GM12878 (cell line): ENCODE measurements at regions of chr5 and their contacts with region 1.

Region 1: DNA sequence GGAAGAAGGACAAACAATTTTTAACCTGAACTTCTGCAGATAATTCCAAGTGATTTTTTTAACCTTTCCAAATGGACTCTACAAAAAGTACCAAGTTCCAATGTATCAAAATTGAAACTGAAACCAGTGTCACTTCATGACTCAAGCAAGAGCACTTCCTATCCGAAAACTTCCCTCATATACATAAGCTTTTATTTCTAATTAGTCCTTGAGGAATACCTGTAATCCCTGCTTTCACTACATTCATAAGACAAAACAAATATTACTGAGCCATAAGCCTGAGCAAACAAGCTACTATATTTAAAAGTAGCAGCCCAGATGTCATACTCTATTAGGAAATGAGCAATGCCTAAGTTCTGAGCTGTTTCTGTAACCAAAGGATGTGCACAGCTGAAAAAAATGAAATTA is 224.4 kb downstream of the EBF1 start:
- DNase-seq: no peak
- ATAC-seq: peak; percentile 54
- H3K4me3 ChIP-seq: no peak overlapping the region
- H3K27ac ChIP-seq: peak overlapping the region; percentile 71
- H3K4me1 ChIP-seq: peaks cover 55% of the 10 kb centered on the region
- H3K27me3 ChIP-seq: no peaks in the 10 kb centered on the region
- CTCF ChIP-seq: no peak
- EP300 ChIP-seq: peak; percentile 60 to 64; a peak in 2 of 4 replicates
- POLR2A ChIP-seq: no peak
- RAD21 ChIP-seq: no peak

Region 2: GRCh38 chr5:158565017-158565789 is 310.1 kb before region 1 on chr5:
- CTCF ChIA-PET with region 1: no interaction called
- POLR2A ChIA-PET with region 1: no interaction called
- RAD21 ChIA-PET with region 1: no interaction called
- SMC1A ChIA-PET with region 1: no interaction called
- in situ Hi-C with region 1: no loop called
- intact Hi-C with region 1: no loop called
- DNase-seq: no peak
- ATAC-seq: no peak
- H3K4me3 ChIP-seq: no peak overlapping the region
- H3K27ac ChIP-seq: no peak overlapping the region
- H3K4me1 ChIP-seq: peaks cover 11% of the 10 kb centered on the region
- H3K27me3 ChIP-seq: no peaks in the 10 kb centered on the region; a peak in 1 of 4 replicates
- CTCF ChIP-seq: no peak
- EP300 ChIP-seq: no peak
- POLR2A ChIP-seq: no peak
- RAD21 ChIP-seq: no peak

Region 3: GRCh38 chr5:158780656-158781237 is 94.5 kb before region 1 on chr5:
- CTCF ChIA-PET with region 1: interaction called, 4 read pairs
- POLR2A ChIA-PET with region 1: interaction called, 8 read pairs
- RAD21 ChIA-PET with region 1: interaction called, 37 read pairs
- SMC1A ChIA-PET with region 1: interaction called, 36 read pairs
- in situ Hi-C with region 1: no loop called
- intact Hi-C with region 1: loop called (anchors 2 kb)
- DNase-seq: peak; percentile 28
- ATAC-seq: peak; percentile 85
- H3K4me3 ChIP-seq: no peak overlapping the region
- H3K27ac ChIP-seq: peak overlapping the region; percentile 46
- H3K4me1 ChIP-seq: peaks cover 18% of the 10 kb centered on the region
- H3K27me3 ChIP-seq: no peaks in the 10 kb centered on the region
- CTCF ChIP-seq: no peak
- EP300 ChIP-seq: no peak
- POLR2A ChIP-seq: no peak
- RAD21 ChIP-seq: no peak

Region 4: DNA sequence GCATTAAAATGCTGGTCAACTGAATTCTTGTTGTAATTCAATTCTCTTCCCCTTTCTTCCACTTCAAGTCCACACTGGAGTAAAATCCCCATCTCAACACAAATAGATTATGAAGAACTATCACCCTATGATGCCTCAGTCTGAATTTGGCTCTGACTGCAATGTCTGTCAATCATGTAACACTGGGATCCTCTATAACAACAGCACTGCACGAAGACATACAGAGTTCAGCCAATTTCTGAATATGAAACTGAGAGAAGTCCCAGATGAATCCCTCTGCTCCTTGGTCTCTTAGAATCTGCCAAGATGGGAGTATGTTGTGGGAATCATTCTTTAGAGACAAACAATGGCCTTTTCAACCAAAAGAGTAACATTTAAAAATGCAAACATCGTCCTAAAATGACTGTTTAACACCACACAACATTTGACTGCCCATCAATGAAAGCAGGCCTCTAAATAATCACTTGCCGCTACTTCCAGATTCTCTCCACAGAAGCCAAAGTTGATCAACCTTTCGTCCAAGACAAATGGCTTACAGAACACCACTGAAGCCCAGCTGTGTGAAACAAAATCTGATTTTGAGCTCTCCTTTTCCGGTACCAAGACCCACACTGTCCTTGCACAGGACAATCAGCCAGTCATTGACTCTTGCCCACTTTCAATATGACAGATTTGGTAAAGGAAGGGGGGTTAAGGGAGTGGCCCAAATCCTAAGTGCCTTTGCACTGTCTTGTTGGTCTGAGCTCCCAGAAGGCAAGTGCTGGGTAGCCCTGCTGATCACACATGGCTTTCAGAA is 33.6 kb before region 1 on chr5:
- CTCF ChIA-PET with region 1: interaction called, 3 read pairs
- POLR2A ChIA-PET with region 1: interaction called, 7 read pairs
- RAD21 ChIA-PET with region 1: interaction called, 16 read pairs
- SMC1A ChIA-PET with region 1: interaction called, 18 read pairs
- in situ Hi-C with region 1: no loop called
- intact Hi-C with region 1: no loop called
- DNase-seq: peak; percentile 80
- ATAC-seq: peak; percentile 97
- H3K4me3 ChIP-seq: no peak overlapping the region
- H3K27ac ChIP-seq: peak overlapping the region; percentile 15
- H3K4me1 ChIP-seq: peaks cover 22% of the 10 kb centered on the region
- H3K27me3 ChIP-seq: no peaks in the 10 kb centered on the region
- CTCF ChIP-seq: no peak
- EP300 ChIP-seq: no peak
- POLR2A ChIP-seq: no peak
- RAD21 ChIP-seq: 0 out of 2 replicates have a peak, but pooled peaks have one; percentile 5

Region 5: GRCh38 chr5:158905281-158905680 is 30.0 kb after region 1 on chr5:
- CTCF ChIA-PET with region 1: interaction called, 3 read pairs
- POLR2A ChIA-PET with region 1: interaction called, 12 read pairs
- RAD21 ChIA-PET with region 1: interaction called, 5 read pairs
- SMC1A ChIA-PET with region 1: interaction called, 131 read pairs
- in situ Hi-C with region 1: no loop called
- intact Hi-C with region 1: no loop called
- DNase-seq: no peak
- ATAC-seq: no peak
- H3K4me3 ChIP-seq: no peak overlapping the region
- H3K27ac ChIP-seq: no peak overlapping the region
- H3K4me1 ChIP-seq: peaks cover 27% of the 10 kb centered on the region
- H3K27me3 ChIP-seq: no peaks in the 10 kb centered on the region
- CTCF ChIP-seq: no peak
- EP300 ChIP-seq: no peak
- POLR2A ChIP-seq: no peak
- RAD21 ChIP-seq: no peak

Region 6: GRCh38 chr5:158976035-158976434 is 100.8 kb after region 1 on chr5:
- CTCF ChIA-PET with region 1: no interaction called
- POLR2A ChIA-PET with region 1: no interaction called
- RAD21 ChIA-PET with region 1: no interaction called
- SMC1A ChIA-PET with region 1: no interaction called
- in situ Hi-C with region 1: no loop called
- intact Hi-C with region 1: no loop called
- DNase-seq: no peak
- ATAC-seq: no peak
- H3K4me3 ChIP-seq: no peak overlapping the region
- H3K27ac ChIP-seq: no peak overlapping the region
- H3K4me1 ChIP-seq: no peaks in the 10 kb centered on the region
- H3K27me3 ChIP-seq: no peaks in the 10 kb centered on the region
- CTCF ChIP-seq: no peak
- EP300 ChIP-seq: no peak
- POLR2A ChIP-seq: no peak
- RAD21 ChIP-seq: no peak

Region 7: DNA sequence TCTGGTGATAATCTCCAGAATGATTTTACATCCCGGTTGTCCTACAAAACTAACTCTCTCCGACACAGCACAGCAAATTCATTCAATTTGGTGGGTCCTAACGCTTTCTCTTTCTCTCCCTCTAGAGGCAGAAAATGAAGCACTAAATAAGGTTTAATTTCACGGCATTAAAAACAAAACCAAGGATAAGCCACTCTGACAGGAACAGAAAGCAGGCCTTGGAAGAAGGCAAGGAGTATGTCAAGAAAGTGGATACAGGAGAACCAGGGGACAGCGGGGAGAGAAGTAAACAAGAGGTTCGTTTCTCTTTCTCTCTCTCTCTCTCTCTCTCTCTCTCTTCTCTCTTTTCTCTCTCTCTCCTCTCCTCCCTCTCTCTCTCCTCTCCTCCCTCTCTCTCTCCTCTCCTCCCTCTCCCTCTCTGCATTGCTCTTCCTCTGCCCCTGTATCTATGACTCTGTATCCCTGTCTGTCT is 174.6 kb after region 1 on chr5:
- CTCF ChIA-PET with region 1: interaction called, 5 read pairs
- POLR2A ChIA-PET with region 1: no interaction called
- RAD21 ChIA-PET with region 1: interaction called, 6 read pairs
- SMC1A ChIA-PET with region 1: interaction called, 13 read pairs
- in situ Hi-C with region 1: no loop called
- intact Hi-C with region 1: loop called (anchors 2 kb)
- DNase-seq: no peak
- ATAC-seq: peak; percentile 1
- H3K4me3 ChIP-seq: peak overlapping the region; percentile 49
- H3K27ac ChIP-seq: peak overlapping the region; percentile 70
- H3K4me1 ChIP-seq: peaks cover 17% of the 10 kb centered on the region
- H3K27me3 ChIP-seq: no peaks in the 10 kb centered on the region
- CTCF ChIP-seq: peak; percentile 15 to 45 (median 32); a peak in 5 of 6 replicates
- EP300 ChIP-seq: no peak
- POLR2A ChIP-seq: no peak
- RAD21 ChIP-seq: peak; percentile 59

Region 8: DNA sequence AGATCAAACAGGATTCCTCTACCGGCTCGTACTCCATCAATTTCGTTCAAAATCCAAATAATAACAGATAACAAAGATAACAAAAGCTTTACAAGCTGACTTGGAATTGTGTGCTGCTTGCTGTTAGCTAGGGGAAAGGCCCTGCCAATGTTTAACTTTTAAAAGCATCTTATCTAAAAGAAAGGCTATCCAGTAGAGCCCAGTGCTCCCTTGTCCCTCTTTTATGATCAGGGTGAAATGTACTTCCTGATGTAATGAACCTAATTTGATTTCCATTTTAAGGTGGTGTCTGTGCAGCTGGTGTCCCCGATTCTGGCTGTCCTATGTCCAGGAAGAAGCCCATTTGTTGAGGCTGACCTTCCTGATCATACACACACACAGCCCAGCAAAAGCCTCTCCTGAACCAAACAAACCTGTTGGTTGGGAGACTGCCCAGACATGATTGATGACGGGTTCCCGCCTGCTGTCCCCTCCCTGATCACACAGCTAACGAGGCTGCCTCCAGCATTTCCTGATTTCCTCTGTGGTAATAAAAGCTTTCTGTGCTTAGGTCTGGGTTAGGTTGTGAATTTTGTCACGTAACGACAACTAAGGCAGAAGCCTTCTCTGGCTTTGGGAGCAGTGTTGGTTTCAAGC is 1189.8 kb after region 1 on chr5:
- CTCF ChIA-PET with region 1: no interaction called
- POLR2A ChIA-PET with region 1: no interaction called
- RAD21 ChIA-PET with region 1: no interaction called
- SMC1A ChIA-PET with region 1: no interaction called
- in situ Hi-C with region 1: no loop called
- intact Hi-C with region 1: no loop called
- DNase-seq: no peak
- ATAC-seq: no peak
- H3K4me3 ChIP-seq: no peak overlapping the region
- H3K27ac ChIP-seq: no peak overlapping the region
- H3K4me1 ChIP-seq: no peaks in the 10 kb centered on the region
- H3K27me3 ChIP-seq: no peaks in the 10 kb centered on the region
- CTCF ChIP-seq: no peak
- EP300 ChIP-seq: no peak
- POLR2A ChIP-seq: no peak
- RAD21 ChIP-seq: no peak